GM12878 (cell line): ENCODE measurements at regions of chr9 and their contacts with region 1.

Region 1: GRCh38 chr9:120875954-120876841 is 790 bp downstream of the PHF19 start:
- DNase-seq: no peak
- ATAC-seq: peak; percentile 80
- H3K4me3 ChIP-seq: peak overlapping the region; percentile 92
- H3K27ac ChIP-seq: peak overlapping the region; percentile 93
- H3K4me1 ChIP-seq: peaks cover 27% of the 10 kb centered on the region
- H3K27me3 ChIP-seq: no peaks in the 10 kb centered on the region
- CTCF ChIP-seq: no peak; a peak in 1 of 6 replicates
- EP300 ChIP-seq: peak in 1 of 2 experiments; percentile 54; a peak in 1 of 4 replicates
- POLR2A ChIP-seq: peak; percentile 79
- RAD21 ChIP-seq: no peak

Region 2: DNA sequence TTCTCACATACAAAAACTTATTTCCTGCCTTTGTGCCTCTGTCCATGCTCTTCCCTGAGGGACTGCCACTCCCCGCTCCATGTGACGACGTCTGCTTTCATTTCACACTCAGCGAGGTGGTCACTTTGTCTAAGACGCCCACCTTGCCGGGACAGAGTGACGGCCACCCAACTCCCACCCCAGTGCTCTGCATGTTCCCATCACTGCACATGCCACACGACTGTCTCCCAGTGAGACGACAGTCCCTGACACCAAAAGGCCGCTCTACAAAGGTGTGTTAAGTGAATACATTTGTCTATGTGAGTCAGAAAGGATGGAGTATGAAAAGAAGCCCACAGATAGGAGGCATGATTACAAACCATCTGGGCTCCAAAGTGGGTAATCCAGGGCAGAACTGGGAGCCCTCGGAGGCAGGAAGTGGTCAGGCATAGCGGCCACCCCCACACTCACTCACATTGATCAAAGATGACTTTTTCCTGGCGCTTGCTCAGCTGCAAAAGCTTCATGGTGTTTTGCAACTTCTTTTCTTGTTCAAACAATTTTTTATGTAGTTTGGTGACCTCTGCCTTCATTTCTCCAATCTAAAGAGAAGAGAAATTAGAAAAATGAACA is 482.0 kb before region 1 on chr9:
- CTCF ChIA-PET with region 1: no interaction called
- POLR2A ChIA-PET with region 1: no interaction called
- RAD21 ChIA-PET with region 1: no interaction called
- SMC1A ChIA-PET with region 1: no interaction called
- in situ Hi-C with region 1: no loop called
- intact Hi-C with region 1: no loop called
- DNase-seq: no peak
- ATAC-seq: no peak
- H3K4me3 ChIP-seq: no peak overlapping the region
- H3K27ac ChIP-seq: no peak overlapping the region
- H3K4me1 ChIP-seq: no peaks in the 10 kb centered on the region
- H3K27me3 ChIP-seq: no peaks in the 10 kb centered on the region
- CTCF ChIP-seq: no peak
- EP300 ChIP-seq: no peak
- POLR2A ChIP-seq: no peak
- RAD21 ChIP-seq: no peak

Region 3: DNA sequence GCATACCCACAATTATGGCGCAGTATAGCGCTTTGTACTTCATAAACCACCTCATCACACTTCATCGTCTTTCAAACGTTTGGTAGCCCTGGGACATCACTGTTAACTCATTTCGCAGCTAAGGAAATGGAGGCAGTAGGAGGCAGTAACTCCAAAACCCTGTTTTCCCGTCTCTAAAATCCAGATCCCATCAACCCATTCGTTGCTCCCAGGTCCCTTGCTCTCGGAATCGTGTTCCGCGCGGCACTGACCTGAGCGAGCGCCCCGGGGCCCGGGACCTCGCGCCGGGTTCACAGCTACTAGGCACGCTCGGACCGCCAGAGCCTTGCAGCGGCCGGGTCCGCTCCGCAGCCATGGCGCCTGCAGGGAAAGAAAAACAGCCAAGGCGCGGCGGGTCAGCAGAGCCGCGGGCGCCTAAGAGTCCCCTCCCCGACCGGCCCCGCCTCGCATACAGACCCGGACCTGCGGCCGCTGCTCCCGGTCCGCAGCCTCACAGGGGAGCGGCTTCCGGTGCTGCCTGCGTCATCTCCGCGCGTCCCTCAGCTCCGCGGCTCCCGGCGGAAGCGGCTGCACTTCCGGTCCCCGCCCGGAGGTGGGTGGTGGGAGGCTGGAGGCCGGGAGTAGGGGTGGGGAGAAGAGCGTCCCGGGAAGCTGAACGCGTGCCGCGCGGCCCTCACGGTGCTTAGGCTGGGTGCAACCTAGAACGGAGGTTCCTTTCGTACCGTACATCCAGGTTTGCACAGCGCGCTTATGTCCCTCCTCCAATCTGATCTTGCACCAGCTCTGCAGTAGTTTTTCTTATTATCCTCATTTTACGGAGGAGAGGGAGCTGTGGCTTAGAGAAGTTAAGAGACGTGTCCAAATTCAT is 83.1 kb before region 1 on chr9 and contains the start of gene FBXW2:
- CTCF ChIA-PET with region 1: interaction called, 3 read pairs
- POLR2A ChIA-PET with region 1: interaction called, 4 read pairs
- RAD21 ChIA-PET with region 1: interaction called, 4 read pairs
- SMC1A ChIA-PET with region 1: no interaction called
- in situ Hi-C with region 1: no loop called
- intact Hi-C with region 1: loop called (anchors 5 kb)
- DNase-seq: peak; percentile 59
- ATAC-seq: peak; percentile 95
- H3K4me3 ChIP-seq: peak within 1 kb of the TSS; percentile 90
- H3K27ac ChIP-seq: peak within 1 kb of the TSS; percentile 86
- H3K4me1 ChIP-seq: peaks cover 9% of the 10 kb centered on the region
- H3K27me3 ChIP-seq: no peaks in the 10 kb centered on the region
- CTCF ChIP-seq: no peak
- EP300 ChIP-seq: no peak
- POLR2A ChIP-seq: peak; percentile 94
- RAD21 ChIP-seq: no peak
- polyA plus RNA-seq, gene FBXW2: 2.9 to 3.0 TPM

Region 4: GRCh38 chr9:120886490-120886967 is 10.3 kb after region 1 on chr9:
- CTCF ChIA-PET with region 1: interaction called, 13 read pairs
- POLR2A ChIA-PET with region 1: interaction called, 75 read pairs
- RAD21 ChIA-PET with region 1: no interaction called
- SMC1A ChIA-PET with region 1: interaction called, 17 read pairs
- in situ Hi-C with region 1: no loop called
- intact Hi-C with region 1: loop called (anchors 1 kb)
- DNase-seq: no peak
- ATAC-seq: peak; percentile 49
- H3K4me3 ChIP-seq: no peak overlapping the region
- H3K27ac ChIP-seq: no peak overlapping the region
- H3K4me1 ChIP-seq: peaks cover 26% of the 10 kb centered on the region
- H3K27me3 ChIP-seq: no peaks in the 10 kb centered on the region
- CTCF ChIP-seq: no peak; a peak in 1 of 6 replicates
- EP300 ChIP-seq: no peak
- POLR2A ChIP-seq: no peak
- RAD21 ChIP-seq: no peak

Region 5: DNA sequence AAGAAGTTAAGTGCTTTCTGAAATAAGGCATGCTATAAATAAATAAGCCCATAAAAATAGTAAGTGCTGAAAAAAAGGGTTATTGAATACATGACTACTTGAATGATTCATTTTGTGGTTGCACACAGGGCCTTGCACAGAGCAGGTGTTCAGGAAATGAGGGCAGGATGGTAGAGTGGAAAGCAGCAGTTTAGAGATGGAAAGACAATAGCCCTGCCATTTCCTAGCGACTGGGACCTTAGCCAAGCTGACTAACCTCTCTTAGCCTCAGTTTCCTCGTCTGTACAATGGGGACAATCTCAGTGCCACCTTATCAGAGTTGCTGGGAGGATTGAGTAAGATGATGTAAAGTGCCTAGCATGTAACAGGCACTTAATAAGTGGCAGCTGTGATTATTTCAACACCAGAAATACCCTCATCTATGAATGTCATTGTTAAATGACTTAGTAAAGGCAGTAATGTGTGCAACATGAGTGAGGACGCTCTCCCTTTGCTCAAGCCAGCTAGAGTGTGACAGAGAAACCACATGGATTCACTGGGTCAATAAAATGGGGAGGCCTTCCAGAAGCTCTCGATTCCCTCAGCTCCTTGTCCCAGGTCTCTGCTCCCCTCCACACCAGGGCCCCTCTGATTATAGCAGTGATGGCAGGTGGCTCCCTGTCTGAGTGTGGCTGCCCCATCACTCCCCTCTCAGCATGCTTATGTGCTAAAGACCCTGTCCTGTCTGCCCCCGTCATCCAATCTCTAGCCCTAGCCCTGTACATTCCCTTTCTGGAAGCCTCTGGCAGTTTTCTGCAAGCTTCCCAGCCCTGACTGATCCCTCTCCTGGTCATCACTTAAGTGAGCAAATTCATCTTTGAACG is 16.8 kb after region 1 on chr9:
- CTCF ChIA-PET with region 1: interaction called, 13 read pairs
- POLR2A ChIA-PET with region 1: interaction called, 75 read pairs
- RAD21 ChIA-PET with region 1: interaction called, 13 read pairs
- SMC1A ChIA-PET with region 1: interaction called, 17 read pairs
- in situ Hi-C with region 1: no loop called
- intact Hi-C with region 1: loop called (anchors 1 kb)
- DNase-seq: no peak
- ATAC-seq: peak; percentile 80
- H3K4me3 ChIP-seq: no peak overlapping the region
- H3K27ac ChIP-seq: peak overlapping the region; percentile 94
- H3K4me1 ChIP-seq: peaks cover 62% of the 10 kb centered on the region
- H3K27me3 ChIP-seq: no peaks in the 10 kb centered on the region
- CTCF ChIP-seq: no peak
- EP300 ChIP-seq: peak; percentile 91 to 95
- POLR2A ChIP-seq: peak; percentile 62
- RAD21 ChIP-seq: no peak